ENCODE measurements at regions of chr1 and their contacts with region 1.

Region 1: GRCh38 chr1:46508757-46509156 is 19.1 kb downstream of the DMBX1 start:
- DNase-seq: peak; percentile 86 to 93 (median 88)
- ATAC-seq: peak; percentile 93
- H3K4me3 ChIP-seq: no peak overlapping the region
- H3K27ac ChIP-seq: peak overlapping the region; percentile 9; the same call in 1 of the 3 replicates
- H3K4me1 ChIP-seq: peaks cover 25 to 59% of the 10 kb centered on the region in 2 experiments; a peak in 4 of 5 replicates
- H3K27me3 ChIP-seq: no peaks in the 10 kb centered on the region
- CTCF ChIP-seq: peak in 1 of 3 experiments; percentile 7; a peak in 2 of 6 replicates
- EP300 ChIP-seq: no peak
- POLR2A ChIP-seq: no peak
- RAD21 ChIP-seq: no peak

Region 2: GRCh38 chr1:46246548-46247435 is 262.0 kb before region 1 on chr1:
- CTCF ChIA-PET with region 1: no interaction called
- POLR2A ChIA-PET with region 1: no interaction called
- in situ Hi-C with region 1: no loop called
- intact Hi-C with region 1: no loop called
- DNase-seq: peak; percentile 65 to 78 (median 68)
- ATAC-seq: peak; percentile 86
- H3K4me3 ChIP-seq: peak overlapping the region; percentile 60
- H3K27ac ChIP-seq: peak overlapping the region; percentile 91
- H3K4me1 ChIP-seq: peaks cover 22 to 40% of the 10 kb centered on the region in 2 experiments; a peak in 4 of 5 replicates
- H3K27me3 ChIP-seq: no peaks in the 10 kb centered on the region
- CTCF ChIP-seq: no peak
- EP300 ChIP-seq: peak; percentile 18; the same call in 1 of the 2 replicates
- POLR2A ChIP-seq: no peak; the same call in 1 of the 2 replicates
- RAD21 ChIP-seq: no peak

Region 3: GRCh38 chr1:46494910-46495309 is 13.8 kb before region 1 on chr1:
- CTCF ChIA-PET with region 1: no interaction called
- POLR2A ChIA-PET with region 1: interaction called, 10 read pairs
- in situ Hi-C with region 1: no loop called
- intact Hi-C with region 1: no loop called
- DNase-seq: no peak
- ATAC-seq: no peak
- H3K4me3 ChIP-seq: no peak overlapping the region
- H3K27ac ChIP-seq: no peak overlapping the region
- H3K4me1 ChIP-seq: peaks cover 6 to 30% of the 10 kb centered on the region in 2 experiments; a peak in 3 of 5 replicates
- H3K27me3 ChIP-seq: no peaks in the 10 kb centered on the region
- CTCF ChIP-seq: no peak
- EP300 ChIP-seq: no peak
- POLR2A ChIP-seq: no peak
- RAD21 ChIP-seq: no peak

Region 4: DNA sequence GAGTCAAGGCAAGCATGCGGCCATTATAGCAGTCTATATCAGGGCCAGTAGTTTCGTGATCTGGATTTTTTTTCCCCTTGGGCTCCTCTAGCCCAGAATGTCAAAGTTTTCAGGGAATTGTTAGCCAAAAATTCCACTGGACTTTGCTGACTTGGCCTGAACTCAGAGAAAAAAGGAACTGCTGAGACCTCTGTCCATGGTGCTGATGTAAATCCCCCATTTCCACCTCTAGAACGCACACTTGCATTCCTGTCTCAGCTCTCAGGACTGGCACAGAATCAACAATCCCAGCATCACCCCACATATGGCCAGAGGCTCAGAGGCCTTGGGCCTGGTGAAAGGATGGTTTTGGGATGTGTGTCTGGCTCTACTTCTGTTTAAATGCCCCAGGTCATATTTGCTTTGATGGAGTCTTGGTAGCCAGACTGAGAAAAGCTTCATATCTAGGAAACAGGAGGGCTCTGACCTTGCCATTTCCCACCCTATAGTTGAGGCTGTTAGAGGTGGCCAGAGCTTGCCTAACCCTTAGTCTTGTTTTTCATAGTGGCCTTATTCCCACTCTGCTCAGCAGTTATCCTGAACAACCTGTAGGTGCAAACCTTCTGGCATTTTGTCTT is 227.1 kb after region 1 on chr1:
- CTCF ChIA-PET with region 1: no interaction called
- POLR2A ChIA-PET with region 1: no interaction called
- in situ Hi-C with region 1: no loop called
- intact Hi-C with region 1: no loop called
- DNase-seq: peak; percentile 56 to 75 (median 64)
- ATAC-seq: peak; percentile 94
- H3K4me3 ChIP-seq: no peak overlapping the region
- H3K27ac ChIP-seq: no peak overlapping the region
- H3K4me1 ChIP-seq: no peaks in the 10 kb centered on the region
- H3K27me3 ChIP-seq: no peaks in the 10 kb centered on the region; a peak in 1 of 5 replicates
- CTCF ChIP-seq: peak; percentile 62 to 71 (median 66)
- EP300 ChIP-seq: no peak
- POLR2A ChIP-seq: no peak
- RAD21 ChIP-seq: peak in 1 of 2 experiments; percentile 36; a peak in 1 of 4 replicates

Measured in K562 (cell line).